H1 (cell line): ENCODE measurements at regions of chr2 and their contacts with region 1.

Region 1: DNA sequence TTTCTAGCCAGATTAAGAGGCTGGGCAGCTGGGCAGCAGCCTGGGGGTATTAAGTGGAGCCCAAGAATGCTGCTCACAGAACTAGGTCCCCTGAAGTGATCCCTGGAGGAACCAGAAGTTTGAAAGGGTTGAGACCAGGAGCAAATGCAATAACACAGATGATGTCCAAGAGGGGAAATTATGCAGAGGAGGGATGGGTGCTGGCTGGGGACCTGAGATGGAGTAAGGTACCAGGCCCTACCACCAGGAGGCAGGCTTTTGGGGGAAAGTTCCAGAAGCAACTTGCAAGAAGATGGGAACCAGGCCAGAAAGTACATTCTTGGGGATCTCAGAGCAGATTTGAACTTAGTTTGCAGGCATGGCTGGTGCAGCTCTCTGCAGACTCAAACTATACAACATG is 175.1 kb downstream of the NCK2 start:
- DNase-seq: peak in 1 of 2 experiments; percentile 84
- H3K4me3 ChIP-seq: no peak overlapping the region
- H3K27ac ChIP-seq: no peak overlapping the region
- H3K4me1 ChIP-seq: no peaks in the 10 kb centered on the region
- H3K27me3 ChIP-seq: no peaks in the 10 kb centered on the region
- CTCF ChIP-seq: peak; percentile 64 to 82 (median 74)
- EP300 ChIP-seq: no peak
- POLR2A ChIP-seq: no peak
- RAD21 ChIP-seq: peak; percentile 59 to 71

Region 2: DNA sequence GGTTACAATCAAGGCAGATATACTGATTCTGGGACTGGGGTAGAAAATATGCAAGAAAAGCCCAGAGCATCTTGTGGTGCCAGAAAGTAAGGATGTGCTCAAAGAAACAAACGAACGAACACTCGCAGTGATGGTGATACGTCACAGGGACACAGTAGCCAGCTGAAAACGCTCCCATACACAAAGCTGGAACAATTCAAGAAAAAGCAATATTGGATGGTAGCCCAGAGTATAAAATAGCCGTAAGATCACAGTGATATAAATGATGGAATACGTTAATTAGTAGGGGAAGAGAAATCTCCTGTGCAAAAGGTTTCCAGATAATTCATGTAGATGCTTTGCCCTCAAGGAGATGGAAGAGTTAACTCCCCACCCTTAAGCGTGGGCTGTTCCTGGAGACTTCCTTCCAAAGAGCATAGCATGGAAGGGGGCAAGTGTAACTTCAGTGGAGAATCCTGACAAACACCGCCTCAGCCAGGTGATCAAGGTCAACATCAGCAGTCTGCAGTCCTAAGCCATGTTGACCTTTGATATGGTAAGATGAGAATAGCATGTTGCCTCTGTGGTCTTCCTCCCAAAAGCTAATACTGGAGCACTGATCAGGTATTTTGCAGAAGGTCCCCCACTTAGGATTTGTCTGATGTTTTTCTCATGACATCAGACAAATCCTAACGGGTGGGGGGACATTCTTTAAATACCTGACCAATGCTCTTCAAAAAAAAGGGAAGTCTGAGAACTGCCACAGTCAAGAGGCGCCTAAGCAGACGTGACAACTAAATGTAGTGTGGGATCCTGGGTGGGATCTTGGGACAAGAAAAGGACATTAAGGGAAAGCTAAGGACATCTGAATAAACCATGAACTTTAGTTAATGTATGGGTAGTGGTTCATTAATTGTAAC is 76.1 kb before region 1 on chr2:
- CTCF ChIA-PET with region 1: no interaction called
- POLR2A ChIA-PET with region 1: no interaction called
- DNase-seq: no peak
- H3K4me3 ChIP-seq: no peak overlapping the region
- H3K27ac ChIP-seq: no peak overlapping the region
- H3K4me1 ChIP-seq: peaks cover 1 to 22% (median 5%) of the 10 kb centered on the region in 4 experiments; a peak in 6 of 7 replicates
- H3K27me3 ChIP-seq: no peaks in the 10 kb centered on the region
- CTCF ChIP-seq: no peak
- EP300 ChIP-seq: no peak
- POLR2A ChIP-seq: no peak
- RAD21 ChIP-seq: no peak

Region 3: GRCh38 chr2:105904938-105905337 is 14.9 kb before region 1 on chr2:
- CTCF ChIA-PET with region 1: interaction called, 17 read pairs
- POLR2A ChIA-PET with region 1: interaction called, 3 read pairs
- DNase-seq: no peak
- H3K4me3 ChIP-seq: no peak overlapping the region
- H3K27ac ChIP-seq: no peak overlapping the region
- H3K4me1 ChIP-seq: no peaks in the 10 kb centered on the region
- H3K27me3 ChIP-seq: no peaks in the 10 kb centered on the region; a peak in 1 of 7 replicates
- CTCF ChIP-seq: no peak
- EP300 ChIP-seq: no peak
- POLR2A ChIP-seq: no peak
- RAD21 ChIP-seq: no peak

Region 4: GRCh38 chr2:105969555-105969954 is 49.7 kb after region 1 on chr2:
- CTCF ChIA-PET with region 1: interaction called, 14 read pairs
- POLR2A ChIA-PET with region 1: no interaction called
- DNase-seq: peak; percentile 50 to 81
- H3K4me3 ChIP-seq: no peak overlapping the region
- H3K27ac ChIP-seq: no peak overlapping the region
- H3K4me1 ChIP-seq: no peaks in the 10 kb centered on the region
- H3K27me3 ChIP-seq: no peaks in the 10 kb centered on the region; a peak in 1 of 7 replicates
- CTCF ChIP-seq: peak; percentile 84 to 98 (median 93)
- EP300 ChIP-seq: no peak
- POLR2A ChIP-seq: no peak
- RAD21 ChIP-seq: peak; percentile 98 to 99